Common myeloid progenitor, CD34-positive (primary cell): ENCODE measurements at regions of chr19 and their contacts with region 1.

Region 1: DNA sequence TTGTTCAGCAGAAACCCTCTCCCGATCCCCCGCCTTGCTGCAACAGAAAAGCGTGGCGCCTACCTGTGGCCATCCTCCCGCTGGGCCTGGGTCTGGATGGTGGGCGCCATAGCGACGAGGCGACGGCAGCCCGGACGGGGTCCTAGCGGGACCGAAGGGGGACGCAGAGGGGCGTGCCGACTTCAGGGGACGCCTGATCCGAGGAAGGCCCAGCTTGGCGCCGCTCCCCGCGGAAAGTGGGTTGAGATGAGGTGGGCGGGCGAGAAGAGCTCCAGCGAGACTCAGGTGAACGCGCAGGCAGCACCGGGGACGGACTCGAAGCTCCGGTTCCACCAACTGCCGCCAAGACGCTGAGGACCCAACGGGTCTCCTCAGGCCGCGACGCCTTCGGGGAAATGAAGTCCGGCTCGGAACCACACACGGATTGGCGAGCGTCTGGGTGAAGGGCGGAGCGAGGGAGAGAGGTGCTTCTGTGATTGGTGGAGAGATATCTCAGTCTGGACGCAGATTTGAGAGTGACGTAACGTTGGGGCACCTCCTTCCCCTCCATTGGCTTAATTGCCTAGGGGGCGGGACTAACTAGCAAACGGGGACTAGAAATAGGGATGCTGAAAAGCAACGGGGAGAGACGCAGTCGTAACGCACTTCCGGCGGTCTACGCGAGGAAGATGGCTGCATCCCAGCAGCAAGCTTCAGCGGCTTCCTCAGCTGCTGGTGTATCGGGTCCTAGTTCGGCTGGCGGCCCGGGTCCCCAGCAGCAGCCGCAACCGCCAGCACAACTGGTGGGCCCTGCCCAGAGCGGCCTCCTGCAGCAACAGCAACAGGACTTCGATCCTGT is at the starts of genes MED29 and PAF1:
- DNase-seq: peak; percentile 100
- H3K4me3 ChIP-seq: peak within 1 kb of the TSS; percentile 55 to 99 (median 98)
- H3K27ac ChIP-seq: peak within 1 kb of the TSS; percentile 98 to 99
- H3K4me1 ChIP-seq: peaks cover 7 to 22% (median 19%) of the 10 kb centered on the region in 4 experiments
- H3K27me3 ChIP-seq: no peaks in the 10 kb centered on the region

Region 2: DNA sequence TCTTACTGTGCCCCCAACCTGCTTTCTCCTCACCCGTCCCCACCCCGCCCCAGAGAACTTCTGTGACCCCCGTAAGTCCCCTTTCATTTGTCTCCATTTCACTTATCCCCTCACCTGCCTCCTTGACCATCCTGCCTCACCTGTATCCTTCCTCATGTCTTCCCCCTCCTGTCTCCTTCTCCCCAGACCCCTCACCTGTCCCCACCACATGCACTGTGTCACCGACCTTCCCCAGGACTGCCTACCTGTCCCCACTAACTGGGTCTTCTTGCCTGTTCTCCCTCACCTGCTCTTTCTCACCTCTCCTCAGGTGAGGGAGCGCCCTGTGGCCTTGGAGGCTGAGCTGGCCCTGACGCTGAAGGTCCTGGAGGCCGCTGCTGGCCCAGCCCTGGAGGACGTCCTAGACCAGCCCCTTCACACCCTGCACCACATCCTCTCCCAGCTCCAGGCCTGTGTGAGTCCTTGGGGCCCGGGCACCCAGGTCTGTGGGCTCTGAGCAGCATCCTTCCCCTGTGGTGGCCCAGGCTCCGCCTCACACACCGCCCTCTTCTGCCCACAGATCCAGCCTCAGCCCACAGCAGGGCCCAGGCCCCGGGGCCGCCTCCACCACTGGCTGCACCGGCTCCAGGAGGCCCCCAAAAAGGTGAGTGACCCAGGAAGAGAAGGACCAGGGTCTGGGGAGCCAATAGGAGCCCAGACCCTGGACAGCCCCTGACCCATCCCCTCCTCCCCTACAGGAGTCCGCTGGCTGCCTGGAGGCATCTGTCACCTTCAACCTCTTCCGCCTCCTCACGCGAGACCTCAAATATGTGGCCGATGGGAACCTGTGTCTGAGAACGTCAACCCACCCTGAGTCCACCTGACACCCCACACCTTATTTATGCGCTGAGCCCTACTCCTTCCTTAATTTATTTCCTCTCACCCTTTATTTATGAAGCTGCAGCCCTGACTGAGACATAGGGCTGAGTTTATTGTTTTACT is 93.0 kb before region 1 on chr19:
- CTCF ChIA-PET with region 1: no interaction called
- POLR2A ChIA-PET with region 1: no interaction called
- DNase-seq: peak in 2 of 3 donors; percentile 69 to 77
- H3K4me3 ChIP-seq: no peak overlapping the region
- H3K27ac ChIP-seq: no peak overlapping the region
- H3K4me1 ChIP-seq: peaks cover 0 to 10% (median 6%) of the 10 kb centered on the region in 4 experiments
- H3K27me3 ChIP-seq: no peaks in the 10 kb centered on the region

Region 3: GRCh38 chr19:39406656-39407393 is 15.9 kb after region 1 on chr19 and contains the start of gene ZFP36:
- CTCF ChIA-PET with region 1: interaction called, 34 read pairs
- POLR2A ChIA-PET with region 1: interaction called, 21 read pairs
- DNase-seq: peak; percentile 76 to 86 (median 84)
- H3K4me3 ChIP-seq: peak within 1 kb of the TSS; percentile 95 to 100 (median 98)
- H3K27ac ChIP-seq: peak within 1 kb of the TSS; percentile 94 to 95
- H3K4me1 ChIP-seq: peaks cover 24 to 88% (median 80%) of the 10 kb centered on the region in 4 experiments
- H3K27me3 ChIP-seq: no peaks in the 10 kb centered on the region